ENCODE measurements at regions of chr13 and their contacts with region 1.

Region 1: GRCh38 chr13:30465585-30466357 is at the start of gene HMGB1:
- DNase-seq: peak; percentile 96 to 99
- H3K4me3 ChIP-seq: peak within 1 kb of the TSS; percentile 98 to 100
- H3K27ac ChIP-seq: peak within 1 kb of the TSS; percentile 98 to 100
- H3K4me1 ChIP-seq: peaks cover 4 to 24% of the 10 kb centered on the region in 2 donors
- H3K27me3 ChIP-seq: no peaks in the 10 kb centered on the region
- CTCF ChIP-seq: no peak
- total RNA-seq, gene HMGB1: 135 TPM

Region 2: DNA sequence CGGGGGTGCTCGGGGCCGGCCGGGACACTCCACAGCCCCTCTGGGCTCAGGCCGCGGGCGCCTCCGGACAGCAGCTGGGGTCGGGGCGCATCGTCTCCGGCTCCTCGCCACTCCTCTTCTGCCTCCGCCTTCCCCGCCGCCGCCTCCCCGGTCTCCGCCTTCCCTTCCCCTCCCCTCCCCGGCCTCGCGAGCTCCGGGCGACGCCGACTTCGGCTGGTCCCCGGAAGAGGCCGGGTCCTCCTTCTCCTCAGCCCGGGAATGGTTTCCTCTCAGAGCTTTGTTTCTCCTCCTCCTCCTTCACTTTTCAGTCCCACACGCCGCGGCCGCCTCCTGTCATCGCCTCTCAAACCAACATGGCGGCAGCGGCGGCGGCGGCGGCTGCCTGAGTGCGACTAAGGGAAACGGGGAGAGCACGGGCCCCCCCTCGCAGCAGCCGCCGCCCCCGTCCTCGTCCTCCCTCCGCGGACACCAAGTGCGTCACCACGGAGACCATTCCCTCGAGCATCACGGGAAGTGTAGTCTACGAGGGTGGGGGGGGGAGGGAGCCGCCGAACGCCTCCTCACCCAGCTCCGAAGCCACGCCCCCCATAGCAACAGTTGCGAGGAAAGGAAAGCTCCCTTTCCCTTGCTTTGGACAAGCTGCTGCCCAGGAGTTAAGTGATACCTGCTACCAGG is 615.4 kb before region 1 on chr13 and contains the start of gene UBL3:
- intact Hi-C with region 1: loop called (anchors 10 kb)
- DNase-seq: peak; percentile 91 to 98
- H3K4me3 ChIP-seq: peak within 1 kb of the TSS; percentile 76 to 95
- H3K27ac ChIP-seq: peak within 1 kb of the TSS; percentile 97 to 98
- H3K4me1 ChIP-seq: peaks cover 0 to 11% of the 10 kb centered on the region in 2 donors
- H3K27me3 ChIP-seq: no peaks in the 10 kb centered on the region
- CTCF ChIP-seq: no peak
- total RNA-seq, gene UBL3: 17.9 TPM

Region 3: DNA sequence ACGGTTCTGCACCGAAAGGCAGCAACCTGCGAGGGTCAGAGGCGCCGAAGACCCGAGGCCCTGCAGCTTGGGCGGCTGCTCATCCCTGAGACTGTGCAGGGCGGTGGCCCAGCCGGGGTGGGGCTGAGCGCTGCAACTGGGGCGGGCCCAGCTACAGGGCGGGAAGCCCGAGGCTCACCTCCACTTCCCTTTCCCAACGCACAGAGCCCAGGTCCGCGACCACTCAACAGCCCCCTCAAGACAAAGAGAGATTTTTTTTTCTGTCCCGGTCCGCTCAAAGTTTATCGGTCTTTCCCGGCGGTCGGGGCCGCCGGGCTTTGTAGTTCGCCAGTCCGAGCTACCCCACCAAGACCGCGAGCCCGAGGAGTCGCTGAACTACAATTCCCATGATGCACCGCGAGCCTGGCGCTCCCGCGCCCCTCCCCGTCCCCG is 159.0 kb before region 1 on chr13:
- intact Hi-C with region 1: loop called (anchors 2 kb)
- DNase-seq: peak; percentile 65 to 94
- H3K4me3 ChIP-seq: peak overlapping the region; percentile 91 to 93
- H3K27ac ChIP-seq: peak overlapping the region; percentile 83 to 90
- H3K4me1 ChIP-seq: peaks cover 5 to 11% of the 10 kb centered on the region in 2 donors
- H3K27me3 ChIP-seq: no peaks in the 10 kb centered on the region
- CTCF ChIP-seq: no peak

Region 4: DNA sequence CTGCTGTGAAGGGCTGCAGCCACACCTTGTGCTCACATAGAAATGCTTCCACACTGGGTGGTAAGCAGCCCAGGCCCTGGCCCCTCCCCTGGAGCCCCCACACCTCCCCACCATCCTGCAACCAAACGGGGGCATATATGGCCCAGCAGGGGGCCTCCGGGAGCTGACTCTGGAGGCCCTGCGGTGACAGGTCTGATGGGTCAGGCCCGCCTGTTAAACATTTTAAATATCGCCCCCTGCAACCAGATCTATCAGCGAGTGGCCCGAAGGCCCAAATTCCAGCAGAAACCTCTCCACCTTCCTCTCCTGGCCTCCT is 110.4 kb before region 1 on chr13:
- intact Hi-C with region 1: no loop called
- DNase-seq: no peak
- H3K4me3 ChIP-seq: no peak overlapping the region
- H3K27ac ChIP-seq: no peak overlapping the region
- H3K4me1 ChIP-seq: no peaks in the 10 kb centered on the region
- H3K27me3 ChIP-seq: no peaks in the 10 kb centered on the region
- CTCF ChIP-seq: peak in 2 of 3 experiments; percentile 13 to 25

Region 5: DNA sequence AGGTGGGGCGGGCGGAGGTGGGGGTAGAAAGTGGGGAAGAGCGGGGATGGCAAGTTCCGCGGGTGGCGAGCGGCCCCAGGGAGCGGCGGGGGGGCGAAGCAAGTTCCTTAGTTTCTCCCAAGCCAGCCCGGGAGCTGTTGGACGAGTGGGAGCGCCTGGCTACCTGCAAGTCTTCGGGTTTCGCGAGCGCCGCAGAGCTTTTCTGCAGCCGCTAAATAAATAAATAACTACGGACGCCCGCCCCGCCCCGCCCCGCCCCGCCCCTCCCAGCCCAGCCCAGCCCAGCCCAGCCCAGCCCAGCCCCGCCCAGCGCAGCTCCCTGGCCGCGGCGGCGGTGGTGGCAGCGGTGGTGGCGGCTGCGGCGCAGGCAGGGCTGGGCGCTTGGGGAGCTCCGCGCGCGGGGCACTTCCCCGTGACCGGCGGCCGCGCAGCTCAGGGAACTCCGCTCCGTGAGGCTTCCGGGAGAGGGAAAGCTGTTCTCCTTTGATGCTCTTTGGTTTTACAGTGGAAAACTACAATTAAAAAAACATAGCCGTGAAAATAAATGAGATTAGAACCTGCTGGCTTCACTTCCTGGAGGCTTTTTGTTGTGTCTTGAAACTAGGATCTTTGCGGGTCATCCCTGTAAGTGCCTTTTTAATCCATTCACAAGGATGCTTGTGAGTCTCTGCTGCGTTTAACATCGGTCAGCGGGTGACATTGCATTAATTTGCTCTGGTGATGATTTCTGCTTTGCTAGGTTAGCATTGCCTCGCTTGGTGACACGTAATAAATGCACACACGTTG is 43.5 kb before region 1 on chr13 and contains the start of gene UBE2L5:
- intact Hi-C with region 1: loop called (anchors 2 kb)
- DNase-seq: peak; percentile 10 to 87
- H3K4me3 ChIP-seq: peak within 1 kb of the TSS; percentile 73 to 75
- H3K27ac ChIP-seq: peak within 1 kb of the TSS; percentile 95 to 98
- H3K4me1 ChIP-seq: peaks cover 8 to 12% of the 10 kb centered on the region in 2 donors
- H3K27me3 ChIP-seq: no peaks in the 10 kb centered on the region
- CTCF ChIP-seq: no peak
- total RNA-seq, gene UBE2L5: not detected

Region 6: DNA sequence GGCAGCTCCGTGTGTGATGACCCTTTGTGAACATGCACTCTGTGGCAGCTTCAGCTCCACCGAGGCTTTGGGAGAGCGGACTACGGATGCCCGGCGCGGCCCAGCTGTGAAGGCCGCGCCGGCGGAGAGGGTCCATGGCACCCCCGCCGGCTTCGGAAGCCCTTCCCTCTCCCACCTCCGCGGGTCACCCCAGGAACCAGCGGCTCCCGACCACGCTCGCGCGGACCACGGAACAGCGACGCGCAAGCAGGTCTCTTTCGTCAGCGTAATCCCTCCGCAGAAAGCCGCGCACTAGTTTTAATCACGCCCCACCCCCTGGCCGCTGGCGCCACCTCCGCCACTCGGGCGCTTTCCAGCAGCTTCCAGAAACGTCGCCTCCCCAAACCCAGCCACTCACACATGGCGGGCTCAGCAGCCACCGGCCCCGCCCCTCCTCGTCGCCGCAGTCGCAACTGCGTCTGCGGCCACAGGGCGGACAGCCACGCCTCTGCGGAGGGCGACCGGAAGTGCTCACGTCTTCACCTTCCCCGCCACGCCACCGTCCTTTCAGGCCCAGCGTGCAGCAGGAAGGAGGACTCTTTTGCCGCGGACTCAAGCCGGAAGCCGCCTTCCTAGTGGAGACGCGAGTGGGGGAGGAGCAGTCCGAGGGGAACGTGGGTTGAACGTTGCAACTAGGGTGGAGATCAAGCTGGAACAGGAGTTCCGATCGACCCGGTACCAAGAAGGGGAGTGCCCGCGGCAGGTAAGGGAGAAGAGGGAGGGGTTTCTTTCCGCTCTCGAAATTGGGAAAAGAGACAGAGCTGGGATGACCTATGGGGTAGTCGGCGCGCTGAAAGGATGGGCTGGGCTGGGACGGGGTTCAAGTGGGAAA is 151.8 kb after region 1 on chr13 and contains the start of gene USPL1:
- intact Hi-C with region 1: loop called (anchors 1 kb)
- DNase-seq: peak; percentile 92 to 98
- H3K4me3 ChIP-seq: peak within 1 kb of the TSS; percentile 77 to 81
- H3K27ac ChIP-seq: peak within 1 kb of the TSS; percentile 99 to 100
- H3K4me1 ChIP-seq: peaks cover 0 to 21% of the 10 kb centered on the region in 2 donors
- H3K27me3 ChIP-seq: no peaks in the 10 kb centered on the region
- CTCF ChIP-seq: peak; percentile 19 to 63 (median 20)
- total RNA-seq, gene USPL1: 4.0 TPM

Region 7: DNA sequence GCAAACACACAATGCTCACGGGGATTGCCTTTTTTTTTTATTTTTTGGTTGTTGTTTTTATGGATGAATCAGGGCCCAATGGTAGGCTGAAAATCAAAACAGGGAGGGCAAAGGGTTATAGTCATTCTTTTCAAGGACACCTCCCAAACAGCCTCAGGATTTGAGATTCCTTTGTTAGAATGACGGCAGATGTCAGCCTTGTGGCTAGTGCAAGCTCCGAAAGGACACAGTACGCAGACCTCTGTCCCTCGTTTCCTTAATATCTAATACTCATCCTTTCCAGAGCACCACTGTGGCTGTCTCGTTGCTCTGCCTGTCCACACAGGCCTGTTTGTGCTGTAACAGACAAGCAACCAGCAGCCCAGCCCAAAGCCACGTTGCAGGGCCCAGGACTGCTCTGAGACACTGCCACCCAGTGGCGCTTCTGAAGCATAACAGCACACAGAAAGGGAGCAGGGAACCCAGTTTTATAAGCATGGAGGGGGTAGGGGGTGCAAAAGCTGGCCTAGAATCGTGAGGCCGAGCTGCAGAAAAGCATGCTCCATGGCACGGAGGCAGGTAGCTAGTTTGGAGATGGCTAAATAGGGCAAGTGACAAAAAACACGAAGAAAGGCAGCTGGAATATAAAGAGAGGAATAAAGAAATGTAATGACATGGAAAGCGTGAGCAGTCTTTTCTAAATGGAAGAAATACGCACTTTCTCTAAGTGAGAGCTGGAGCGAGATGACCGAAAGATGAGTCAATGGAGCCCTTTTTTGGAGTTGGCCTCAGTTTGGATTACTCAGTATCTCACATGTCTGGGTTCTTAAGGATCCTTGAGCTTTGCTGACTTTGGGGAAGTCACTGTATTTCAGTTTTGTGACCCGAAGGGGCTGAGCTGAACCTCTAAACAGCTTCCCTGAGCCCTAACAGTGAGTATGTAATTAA is 399.6 kb after region 1 on chr13:
- intact Hi-C with region 1: loop called (anchors 10 kb)
- DNase-seq: peak in 1 of 2 donors; percentile 90
- H3K4me3 ChIP-seq: peak overlapping the region in 1 of 2 donors; percentile 4
- H3K27ac ChIP-seq: peak overlapping the region; percentile 87 to 97
- H3K4me1 ChIP-seq: peaks cover 7 to 46% of the 10 kb centered on the region in 2 donors
- H3K27me3 ChIP-seq: no peaks in the 10 kb centered on the region
- CTCF ChIP-seq: peak; percentile 93 to 94 (median 94)

Region 8: GRCh38 chr13:31161828-31162590 is 696.2 kb after region 1 on chr13 and contains the start of gene HSPH1:
- intact Hi-C with region 1: loop called (anchors 10 kb)
- DNase-seq: peak; percentile 95 to 99
- H3K4me3 ChIP-seq: peak within 1 kb of the TSS; percentile 80 to 91
- H3K27ac ChIP-seq: peak within 1 kb of the TSS; percentile 94 to 95
- H3K4me1 ChIP-seq: peaks cover 0 to 10% of the 10 kb centered on the region in 2 donors
- H3K27me3 ChIP-seq: no peaks in the 10 kb centered on the region
- CTCF ChIP-seq: peak in 2 of 3 experiments; percentile 24 to 26
- total RNA-seq, gene HSPH1: 20.6 TPM